Cardiac septum (tissue), 1 donor: ENCODE measurements at regions of chr16 and their contacts with region 1.

Region 1: DNA sequence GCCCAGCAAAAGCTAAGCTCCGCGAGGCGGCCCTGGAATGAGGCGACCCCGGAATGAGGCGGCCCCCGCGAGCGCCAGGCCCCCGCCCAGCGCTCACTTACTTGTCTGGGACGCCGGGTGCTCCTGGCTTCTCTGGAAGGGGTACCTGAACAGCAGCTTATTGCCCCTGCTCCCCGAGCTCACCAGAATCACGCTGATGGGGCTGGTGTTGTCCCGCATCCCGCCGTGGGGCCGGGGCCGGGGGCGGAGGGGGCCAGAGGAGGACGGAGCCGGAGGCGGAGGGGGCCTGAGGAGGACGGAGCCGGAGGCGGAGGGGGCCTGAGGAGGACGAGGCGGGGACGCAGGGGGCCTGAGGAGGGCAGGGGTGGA is 440 bp downstream of the NPRL3 start:
- DNase-seq: no peak

Region 2: GRCh38 chr16:117379-118365 is 20.4 kb before region 1 on chr16:
- intact Hi-C with region 1: no loop called
- DNase-seq: no peak

Region 3: GRCh38 chr16:234468-235305 is 96.7 kb after region 1 on chr16 and contains the start of gene FAM234A:
- intact Hi-C with region 1: loop called (anchors 2 kb)
- DNase-seq: peak; percentile 97
- total RNA-seq, gene FAM234A: 137 TPM